AG04449 (cell line): ENCODE measurements at regions of chr2 and their contacts with region 1.

Region 1: GRCh38 chr2:112884869-112885505 is 26.0 kb upstream of the IL37 start:
- DNase-seq: no peak
- H3K4me3 ChIP-seq: no peak overlapping the region
- CTCF ChIP-seq: peak; percentile 51

Region 2: DNA sequence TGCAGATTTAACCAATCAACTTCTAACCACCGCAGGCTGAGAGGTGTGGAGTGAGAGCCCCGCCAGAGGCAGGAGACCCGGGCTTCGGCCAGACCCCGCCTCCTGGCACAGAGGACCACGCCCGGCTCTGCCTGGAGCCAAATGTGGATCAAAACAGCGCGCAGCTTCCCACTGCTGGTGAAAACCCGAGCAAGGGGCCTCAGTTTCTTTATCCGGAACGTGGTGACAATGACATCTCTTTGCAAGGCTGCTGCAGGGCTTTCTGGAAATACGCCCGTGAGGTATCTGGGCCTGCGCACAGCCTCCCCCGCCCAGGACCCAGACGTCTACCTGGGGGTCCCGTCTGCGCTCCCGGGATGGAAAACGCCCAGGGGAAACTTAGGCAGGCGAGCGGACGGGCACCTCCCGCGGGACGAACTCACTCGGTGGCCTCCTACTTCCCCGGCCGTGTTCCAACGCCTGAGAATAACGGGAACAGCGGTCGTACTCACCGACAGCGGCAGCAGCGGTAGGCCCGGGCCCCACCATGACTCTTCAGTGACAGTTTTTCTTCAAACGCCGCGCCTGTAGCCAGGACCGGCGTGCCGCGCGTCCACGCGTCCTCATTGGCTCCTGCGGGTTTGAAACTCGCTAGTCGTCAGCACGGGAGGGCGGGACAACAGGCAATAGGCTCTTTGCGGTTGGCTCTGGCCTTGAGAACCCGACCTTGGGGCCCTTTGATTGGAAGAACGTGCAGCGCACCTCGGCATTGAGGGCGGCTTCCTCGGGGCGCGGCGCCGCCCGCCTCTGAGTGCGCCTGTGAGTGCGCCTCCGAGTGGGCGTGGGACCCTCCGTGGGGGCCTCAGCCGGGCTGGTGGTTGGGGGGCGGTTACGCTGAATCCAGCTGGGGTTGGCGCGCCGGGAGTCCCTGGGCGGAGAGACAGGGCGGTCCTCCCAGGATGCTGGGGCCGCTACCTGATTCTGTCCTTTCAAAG is 120.6 kb before region 1 on chr2 and contains the start of gene CKAP2L:
- CTCF ChIA-PET with region 1: interaction called, 13 read pairs
- POLR2A ChIA-PET with region 1: no interaction called
- DNase-seq: peak; percentile 83
- H3K4me3 ChIP-seq: peak within 1 kb of the TSS; percentile 88
- CTCF ChIP-seq: no peak